ENCODE measurements at regions of chr12 and their contacts with region 1.

Region 1: GRCh38 chr12:98644711-98645402 is at the starts of genes APAF1 and IKBIP:
- DNase-seq: peak; percentile 99
- ATAC-seq: peak; percentile 100
- total RNA-seq, gene APAF1: 4.0 TPM
- total RNA-seq, gene IKBIP: 4.8 TPM

Region 2: DNA sequence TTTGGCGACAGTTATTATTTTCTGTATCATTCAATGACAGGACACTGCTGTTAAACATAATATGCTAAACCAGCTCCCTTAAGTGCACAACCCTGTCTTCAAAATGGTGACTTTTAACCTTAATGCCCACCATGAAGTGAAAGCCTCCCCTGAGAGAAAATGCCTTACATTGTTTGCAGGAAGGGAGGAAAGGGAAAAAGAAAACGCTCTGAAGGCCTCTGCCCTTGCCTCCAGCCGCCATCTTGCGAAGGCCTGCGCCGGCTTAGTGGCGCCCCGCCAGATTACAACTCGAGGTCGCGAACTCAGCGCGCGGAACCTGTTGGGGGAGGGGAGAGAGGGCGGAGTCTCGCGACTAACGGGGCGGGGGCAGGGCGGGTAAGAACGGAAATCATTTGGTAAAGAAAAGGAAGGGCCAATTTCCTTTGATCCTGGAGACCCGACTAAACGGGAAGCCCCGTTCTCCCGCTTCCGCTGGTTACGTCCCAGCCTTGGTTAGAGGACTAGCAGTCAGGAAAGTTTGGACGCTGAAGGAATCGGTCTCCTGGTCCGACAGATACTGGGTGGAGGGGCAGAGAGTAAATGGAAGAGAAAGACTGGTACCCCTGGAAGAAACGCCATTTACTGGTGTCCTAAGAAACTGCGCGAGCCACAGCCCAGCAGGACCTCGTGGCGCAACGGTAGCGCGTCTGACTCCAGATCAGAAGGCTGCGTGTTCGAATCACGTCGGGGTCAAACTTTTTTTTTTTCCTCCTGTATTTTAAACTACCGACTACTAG is 141.1 kb before region 1 on chr12:
- intact Hi-C with region 1: loop called (anchors 5 kb)
- DNase-seq: peak; percentile 98
- ATAC-seq: peak; percentile 95

Region 3: DNA sequence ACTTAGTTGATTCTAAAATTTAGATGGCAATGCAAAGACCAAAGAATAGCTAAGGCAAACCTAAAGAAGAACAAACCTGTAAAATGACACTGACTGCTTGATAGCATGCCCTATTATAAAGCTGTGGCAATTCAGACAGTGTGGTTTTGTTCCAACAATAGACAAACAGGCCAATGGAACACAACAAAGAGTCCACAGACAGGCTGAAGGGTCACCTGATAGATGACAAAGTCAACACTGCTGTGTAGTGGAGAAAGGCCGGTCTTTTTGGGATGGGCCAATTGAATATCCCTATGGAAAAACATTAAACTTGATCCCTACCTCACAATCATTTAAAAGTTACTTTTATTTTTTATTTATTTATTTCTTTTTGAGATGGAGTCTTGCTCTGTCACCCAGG is 85.2 kb before region 1 on chr12:
- intact Hi-C with region 1: no loop called
- DNase-seq: no peak
- ATAC-seq: no peak

Region 4: GRCh38 chr12:98572010-98572409 is 72.8 kb before region 1 on chr12:
- intact Hi-C with region 1: loop called (anchors 2 kb)
- DNase-seq: no peak
- ATAC-seq: no peak

Region 5: GRCh38 chr12:98593351-98594049 is 51.4 kb before region 1 on chr12 and contains the start of gene SLC25A3:
- intact Hi-C with region 1: loop called (anchors 2 kb)
- DNase-seq: peak; percentile 99
- ATAC-seq: peak; percentile 99
- total RNA-seq, gene SLC25A3: 1,790 TPM

Measured in Right ventricle myocardium inferior (tissue), 1 donor.